ENCODE measurements at regions of chr10 and their contacts with region 1.

Region 1: GRCh38 chr10:71708301-71708703 is 11.3 kb downstream of the C10orf105 start:
- DNase-seq: peak; percentile 83
- ATAC-seq: peak; percentile 23

Region 2: DNA sequence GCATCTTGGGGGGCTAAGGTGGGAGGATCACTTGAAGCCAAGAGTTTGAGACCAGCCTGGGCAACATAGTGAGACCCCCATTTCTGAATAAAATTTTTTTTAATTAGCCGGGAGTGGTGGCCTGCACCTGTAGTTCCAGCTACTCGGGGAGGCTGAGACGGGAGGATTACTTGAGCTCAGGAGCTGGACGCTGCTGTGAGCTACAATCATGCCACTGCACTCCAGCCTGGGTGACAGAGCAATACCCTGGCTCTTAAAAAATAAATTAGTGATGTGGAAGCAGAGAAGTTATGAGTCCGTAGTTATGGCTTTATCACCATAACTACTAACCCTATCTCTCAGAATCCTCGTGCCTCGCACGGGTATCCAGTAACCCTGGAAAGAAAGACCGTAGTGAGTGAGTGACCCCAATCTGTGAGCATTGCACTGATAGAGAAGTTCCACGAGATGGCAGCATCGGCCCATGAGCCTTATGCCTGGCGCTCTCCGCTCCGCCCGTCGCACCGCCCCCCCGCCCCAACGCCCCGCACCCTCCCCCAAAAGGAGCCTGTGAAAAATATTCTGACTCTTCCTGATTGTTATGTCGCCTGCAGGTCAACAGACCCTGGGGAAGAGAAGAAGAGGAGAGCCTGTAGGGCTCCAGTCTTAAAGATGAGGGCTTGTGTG is 394.1 kb before region 1 on chr10:
- intact Hi-C with region 1: loop called (anchors 5 kb)
- DNase-seq: peak; percentile 79
- ATAC-seq: peak; percentile 65

Measured in sciatic nerve (tissue), 2 donors.